ENCODE measurements at regions of chr6 and their contacts with region 1.

Region 1: DNA sequence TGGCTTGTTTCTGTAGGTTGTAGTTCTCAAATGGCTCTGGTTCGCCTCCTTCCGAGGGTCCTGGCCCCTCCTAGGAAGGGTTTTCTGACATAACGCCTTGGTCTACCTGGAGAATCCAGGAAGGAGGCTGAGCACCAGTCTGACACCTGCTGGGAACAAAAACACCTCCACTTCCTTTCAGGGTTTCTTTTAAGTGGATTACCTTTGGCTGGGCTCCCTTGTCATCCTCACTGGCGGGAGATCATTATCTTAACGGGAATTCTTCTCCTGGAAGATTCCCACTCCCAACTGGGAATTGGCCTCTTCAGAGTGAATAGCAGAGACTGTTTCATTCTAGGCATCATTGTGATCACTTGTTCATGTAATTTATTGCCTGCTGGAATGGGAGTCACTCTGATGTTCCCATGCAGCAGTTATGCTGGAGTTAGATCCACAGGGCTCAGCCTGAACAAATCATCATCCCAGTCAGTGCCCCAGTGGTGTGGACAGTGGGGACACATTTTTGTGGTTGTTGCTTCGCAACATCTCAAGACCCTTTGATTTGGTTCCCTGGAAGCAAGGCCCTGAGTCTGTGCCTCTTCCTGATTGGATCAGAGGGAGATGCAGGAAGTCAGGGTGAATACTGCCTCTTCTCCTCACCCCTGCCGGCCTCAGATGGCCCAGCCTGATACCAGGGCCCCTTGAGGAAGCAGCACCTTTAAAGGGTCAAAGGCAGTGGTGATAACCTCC is 49.1 kb downstream of the LYRM2 start:
- DNase-seq: no peak
- H3K4me3 ChIP-seq: no peak overlapping the region
- H3K27ac ChIP-seq: no peak overlapping the region
- H3K4me1 ChIP-seq: peaks cover 0 to 14% (median 2%) of the 10 kb centered on the region in 4 donors
- H3K27me3 ChIP-seq: no peaks in the 10 kb centered on the region
- CTCF ChIP-seq: no peak

Region 2: DNA sequence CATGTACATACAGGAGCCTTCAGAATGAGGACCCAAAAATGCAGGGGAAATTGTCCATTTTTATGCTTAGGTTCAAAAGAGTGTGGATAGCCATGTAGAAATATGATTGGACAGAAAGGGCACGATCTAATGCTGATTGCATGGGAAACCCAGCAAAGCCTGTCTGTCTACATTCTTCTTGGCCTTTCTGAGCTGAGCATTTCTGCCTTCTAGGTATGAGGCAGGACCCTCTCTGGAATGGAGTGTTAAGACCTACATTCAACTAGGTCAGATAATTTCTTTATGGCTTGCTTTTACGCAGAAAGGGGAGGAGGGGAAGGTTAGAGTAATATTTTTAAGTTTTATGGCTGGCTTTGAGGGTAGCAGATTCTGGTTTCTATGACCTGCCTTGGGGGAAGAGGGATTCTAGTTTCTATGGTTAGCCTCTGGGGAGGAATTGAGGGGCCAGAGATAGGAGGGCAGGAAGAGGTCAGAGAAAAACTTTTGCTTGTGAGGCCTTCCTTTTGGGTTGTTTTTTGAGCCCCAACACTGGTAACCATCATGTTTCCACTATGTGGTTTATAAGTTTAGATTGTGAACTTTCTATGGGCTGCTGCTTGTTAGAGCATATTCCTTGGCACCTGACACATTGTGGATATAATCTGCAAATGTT is 14.4 kb before region 1 on chr6:
- intact Hi-C with region 1: loop called (anchors 1 kb)
- DNase-seq: no peak
- H3K4me3 ChIP-seq: no peak overlapping the region
- H3K27ac ChIP-seq: no peak overlapping the region
- H3K4me1 ChIP-seq: peaks cover 0 to 11% (median 0%) of the 10 kb centered on the region in 4 donors
- H3K27me3 ChIP-seq: no peaks in the 10 kb centered on the region
- CTCF ChIP-seq: no peak

Region 3: DNA sequence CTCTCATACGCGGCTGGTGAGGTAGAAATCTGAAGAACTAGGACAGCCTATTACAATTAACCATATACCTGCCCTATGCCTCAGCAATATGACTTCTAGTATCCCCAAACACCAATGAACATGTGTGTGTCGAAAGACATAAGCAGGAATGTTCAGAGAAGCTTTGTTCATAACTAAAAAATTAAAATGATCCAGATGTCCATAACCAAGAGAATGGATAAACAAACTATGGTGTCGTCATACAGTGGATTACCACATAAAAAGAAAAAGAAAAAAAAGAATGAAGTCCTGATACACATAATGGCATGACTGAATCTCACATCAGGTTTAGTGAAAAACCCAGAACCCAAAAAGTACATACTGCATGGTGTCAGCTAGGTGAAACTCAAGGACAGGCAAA is 156.3 kb after region 1 on chr6:
- intact Hi-C with region 1: no loop called
- DNase-seq: no peak
- H3K4me3 ChIP-seq: no peak overlapping the region
- H3K27ac ChIP-seq: no peak overlapping the region
- H3K4me1 ChIP-seq: no peaks in the 10 kb centered on the region
- H3K27me3 ChIP-seq: no peaks in the 10 kb centered on the region
- CTCF ChIP-seq: no peak